ENCODE measurements at regions of chr9 and their contacts with region 1.

Region 1: GRCh38 chr9:37859043-37859442 is 44.9 kb downstream of the SLC25A51 start:
- DNase-seq: no peak
- ATAC-seq: no peak
- H3K4me3 Mint-ChIP-seq: no peak overlapping the region
- H3K27ac Mint-ChIP-seq: no peak overlapping the region
- H3K4me1 Mint-ChIP-seq: no peaks in the 10 kb centered on the region
- H3K27me3 Mint-ChIP-seq: no peaks in the 10 kb centered on the region
- CTCF ChIP-seq: no peak

Region 2: DNA sequence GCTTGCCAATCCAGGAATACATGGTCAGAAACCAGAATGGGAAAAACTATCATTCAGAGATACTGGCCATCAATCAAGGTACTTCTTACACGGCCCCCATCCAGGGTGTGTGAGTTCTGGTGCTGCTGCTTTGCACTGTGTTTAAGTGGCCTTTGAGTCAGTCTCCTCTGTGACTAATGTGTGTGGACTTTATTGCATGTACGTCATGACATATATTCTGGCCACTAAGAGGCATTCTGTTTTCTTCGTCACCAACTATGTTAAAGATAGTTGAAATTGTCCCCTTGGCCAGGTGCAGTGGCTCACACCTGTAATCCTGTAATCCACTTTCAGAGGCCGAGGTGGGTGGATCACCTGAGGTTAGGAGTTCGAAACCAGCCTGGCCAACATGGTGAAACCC is 82.7 kb before region 1 on chr9:
- CTCF ChIA-PET with region 1: no interaction called
- POLR2A ChIA-PET with region 1: no interaction called
- intact Hi-C with region 1: loop called (anchors 10 kb)
- DNase-seq: no peak
- ATAC-seq: no peak
- H3K4me3 Mint-ChIP-seq: no peak overlapping the region
- H3K27ac Mint-ChIP-seq: no peak overlapping the region
- H3K4me1 Mint-ChIP-seq: no peaks in the 10 kb centered on the region
- H3K27me3 Mint-ChIP-seq: no peaks in the 10 kb centered on the region
- CTCF ChIP-seq: no peak